CD4-positive, alpha-beta T cell (primary cell): ENCODE measurements at regions of chr6 and their contacts with region 1.

Region 1: DNA sequence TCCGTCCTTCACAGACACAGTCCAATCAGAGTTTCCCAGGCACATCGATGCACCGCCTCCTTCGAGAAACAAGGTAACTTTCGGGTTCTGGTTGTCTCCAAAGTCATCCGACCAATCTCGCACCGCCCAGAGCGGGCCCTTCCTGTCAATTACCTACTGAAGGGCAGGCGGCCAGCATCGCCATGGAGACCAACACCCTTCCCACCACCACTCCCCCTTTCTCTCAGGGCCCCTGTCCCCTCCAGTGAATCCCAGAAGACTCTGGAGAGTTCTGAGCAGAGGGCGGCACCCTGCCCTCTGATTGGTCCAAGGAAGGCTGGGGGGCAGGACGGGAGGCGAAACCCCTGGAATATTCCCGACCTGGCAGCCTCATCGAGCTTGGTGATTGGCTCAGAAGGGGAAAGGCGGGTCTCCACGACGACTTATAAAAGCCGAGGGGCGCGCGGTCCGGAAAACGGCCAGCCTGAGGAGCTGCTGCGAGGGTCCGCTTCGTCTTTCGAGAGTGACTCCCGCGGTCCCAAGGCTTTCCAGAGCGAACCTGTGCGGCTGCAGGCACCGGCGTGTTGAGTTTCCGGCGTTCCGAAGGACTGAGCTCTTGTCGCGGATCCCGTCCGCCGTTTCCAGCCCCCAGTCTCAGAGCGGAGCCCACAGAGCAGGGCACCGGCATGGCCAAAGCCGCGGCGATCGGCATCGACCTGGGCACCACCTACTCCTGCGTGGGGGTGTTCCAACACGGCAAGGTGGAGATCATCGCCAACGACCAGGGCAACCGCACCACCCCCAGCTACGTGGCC is at the start of gene HSPA1B:
- DNase-seq: peak; percentile 64 to 93 (median 84)
- ATAC-seq: peak; percentile 66
- H3K4me3 ChIP-seq: peak within 1 kb of the TSS; percentile 84
- H3K4me3 Mint-ChIP-seq: peak within 1 kb of the TSS; percentile 96
- H3K27ac ChIP-seq: peak within 1 kb of the TSS; percentile 74 to 76
- H3K27ac Mint-ChIP-seq: peak within 1 kb of the TSS; percentile 97
- H3K4me1 ChIP-seq: peaks cover 43% of the 10 kb centered on the region
- H3K4me1 Mint-ChIP-seq: peaks cover 43% of the 10 kb centered on the region
- H3K27me3 ChIP-seq: no peaks in the 10 kb centered on the region
- H3K27me3 Mint-ChIP-seq: no peaks in the 10 kb centered on the region
- CTCF ChIP-seq: no peak
- total RNA-seq, gene HSPA1B: 8.3 to 9.8 TPM

Region 2: DNA sequence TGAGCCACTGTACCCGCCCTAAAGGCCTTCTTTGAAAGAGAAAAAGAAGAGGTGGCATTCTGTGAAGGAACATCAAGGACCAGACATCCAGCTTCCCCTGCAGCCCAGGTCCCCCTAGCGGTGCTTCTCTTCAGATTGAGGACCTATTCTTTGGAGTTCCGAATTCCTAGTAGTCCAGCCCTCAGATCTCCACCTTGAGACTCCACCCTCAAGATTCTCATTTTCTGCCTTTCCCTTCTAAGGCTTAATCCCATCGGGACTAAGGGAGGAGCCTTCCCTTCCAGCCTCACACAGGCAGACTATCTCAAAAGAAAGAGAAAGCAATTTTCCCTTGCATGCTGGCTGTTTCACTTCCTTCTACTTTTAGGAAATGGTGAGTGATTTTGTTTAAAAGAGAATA is 784.7 kb before region 1 on chr6:
- CTCF ChIA-PET with region 1: no interaction called
- POLR2A ChIA-PET with region 1: no interaction called
- intact Hi-C with region 1: no loop called
- DNase-seq: peak in 9 of 14 experiments; percentile 4 to 57 (median 45)
- ATAC-seq: no peak
- H3K4me3 ChIP-seq: no peak overlapping the region
- H3K4me3 Mint-ChIP-seq: no peak overlapping the region
- H3K27ac ChIP-seq: no peak overlapping the region
- H3K27ac Mint-ChIP-seq: no peak overlapping the region
- H3K4me1 ChIP-seq: no peaks in the 10 kb centered on the region
- H3K4me1 Mint-ChIP-seq: no peaks in the 10 kb centered on the region
- H3K27me3 ChIP-seq: peaks cover 0 to under 1% of the 10 kb centered on the region in 2 experiments
- H3K27me3 Mint-ChIP-seq: peaks cover 42% of the 10 kb centered on the region
- CTCF ChIP-seq: peak; percentile 57

Region 3: DNA sequence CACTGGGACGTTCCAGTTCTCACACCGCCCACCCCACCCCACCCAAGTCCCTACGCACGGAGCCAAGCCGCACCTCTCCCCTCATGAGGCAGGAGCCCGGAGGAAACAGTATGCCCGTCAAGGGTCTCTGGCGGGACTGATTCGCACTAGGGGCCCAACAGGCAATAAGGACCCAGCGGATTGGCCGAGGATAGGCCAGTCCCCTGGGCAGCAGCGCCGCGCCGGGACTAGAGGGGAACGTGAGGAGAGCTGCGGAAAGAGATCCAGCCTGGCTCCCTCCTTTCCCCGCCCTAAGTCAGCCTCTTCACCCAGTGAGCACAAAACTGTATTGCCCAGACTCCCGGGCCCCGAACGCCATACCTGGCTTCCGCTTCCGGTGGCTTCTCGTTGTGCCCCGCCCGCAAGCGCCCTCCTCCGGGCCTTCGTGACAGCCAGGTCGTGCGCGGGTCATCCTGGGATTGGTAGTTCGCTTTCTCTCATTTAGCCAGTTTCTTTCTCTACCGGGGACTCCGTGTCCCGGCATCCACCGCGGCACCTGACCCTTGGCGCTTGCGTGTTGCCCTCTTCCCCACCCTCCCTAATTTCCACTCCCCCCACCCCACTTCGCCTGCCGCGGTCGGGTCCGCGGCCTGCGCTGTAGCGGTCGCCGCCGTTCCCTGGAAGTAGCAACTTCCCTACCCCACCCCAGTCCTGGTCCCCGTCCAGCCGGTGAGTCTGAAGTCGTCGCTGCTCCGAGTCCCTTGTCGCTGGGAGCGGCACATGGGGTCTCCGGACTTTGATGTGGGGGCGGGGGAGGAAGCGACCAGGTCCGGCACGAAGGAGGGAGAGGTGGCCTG is 161.8 kb before region 1 on chr6 and contains the start of gene CSNK2B:
- CTCF ChIA-PET with region 1: no interaction called
- POLR2A ChIA-PET with region 1: interaction called, 12 read pairs
- intact Hi-C with region 1: no loop called
- DNase-seq: peak; percentile 94 to 99 (median 97)
- ATAC-seq: peak; percentile 85
- H3K4me3 ChIP-seq: peak within 1 kb of the TSS; percentile 79
- H3K4me3 Mint-ChIP-seq: peak within 1 kb of the TSS; percentile 95
- H3K27ac ChIP-seq: peak within 1 kb of the TSS; percentile 93 to 96
- H3K27ac Mint-ChIP-seq: peak within 1 kb of the TSS; percentile 97
- H3K4me1 ChIP-seq: peaks cover 61% of the 10 kb centered on the region
- H3K4me1 Mint-ChIP-seq: peaks cover 51% of the 10 kb centered on the region
- H3K27me3 ChIP-seq: no peaks in the 10 kb centered on the region
- H3K27me3 Mint-ChIP-seq: no peaks in the 10 kb centered on the region
- CTCF ChIP-seq: no peak
- total RNA-seq, gene CSNK2B: 88.0 to 92.6 TPM

Region 4: DNA sequence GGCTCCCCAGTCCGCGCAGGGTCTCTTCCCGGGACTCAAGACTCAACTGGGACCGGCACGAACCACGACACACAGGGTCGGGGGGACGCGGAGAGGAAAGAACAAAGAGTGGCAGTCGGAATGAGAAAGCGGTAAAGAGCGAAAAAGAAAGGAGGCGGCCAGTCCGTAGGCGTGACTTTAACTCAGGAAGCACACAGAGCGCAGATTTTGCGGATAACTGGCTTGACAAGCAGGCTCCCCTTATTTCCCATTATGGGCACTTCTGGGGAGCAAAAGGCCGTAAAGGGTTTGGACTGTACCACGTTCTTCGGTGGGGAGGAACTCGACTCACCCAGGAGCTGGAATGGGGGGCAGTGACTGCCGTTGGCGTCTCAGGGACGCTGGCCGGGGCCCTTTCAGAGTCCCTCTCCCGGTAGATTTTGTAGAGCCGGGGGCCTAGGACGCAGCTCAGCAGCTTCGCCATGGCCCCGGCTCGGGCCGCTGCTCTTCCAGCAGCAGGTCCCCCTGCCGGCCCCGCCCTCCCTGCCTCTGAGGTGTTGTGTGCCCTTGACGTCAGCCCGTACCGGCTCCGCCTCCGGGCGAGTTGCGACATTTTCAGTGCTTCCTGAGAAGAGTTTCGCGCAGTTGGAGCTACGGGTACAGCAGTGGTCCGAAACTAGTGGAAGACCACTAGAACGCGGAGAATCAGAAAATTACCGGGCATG is 124.5 kb before region 1 on chr6 and contains the start of gene ABHD16A:
- CTCF ChIA-PET with region 1: interaction called, 5 read pairs
- POLR2A ChIA-PET with region 1: interaction called, 16 read pairs
- intact Hi-C with region 1: no loop called
- DNase-seq: peak; percentile 94 to 99 (median 97)
- ATAC-seq: peak; percentile 91
- H3K4me3 ChIP-seq: peak within 1 kb of the TSS; percentile 67
- H3K4me3 Mint-ChIP-seq: peak within 1 kb of the TSS; percentile 94
- H3K27ac ChIP-seq: peak within 1 kb of the TSS; percentile 95 to 98
- H3K27ac Mint-ChIP-seq: peak within 1 kb of the TSS; percentile 94
- H3K4me1 ChIP-seq: peaks cover 35% of the 10 kb centered on the region
- H3K4me1 Mint-ChIP-seq: peaks cover 33% of the 10 kb centered on the region
- H3K27me3 ChIP-seq: no peaks in the 10 kb centered on the region
- H3K27me3 Mint-ChIP-seq: no peaks in the 10 kb centered on the region
- CTCF ChIP-seq: no peak
- total RNA-seq, gene ABHD16A: 52.3 to 59.3 TPM

Region 5: DNA sequence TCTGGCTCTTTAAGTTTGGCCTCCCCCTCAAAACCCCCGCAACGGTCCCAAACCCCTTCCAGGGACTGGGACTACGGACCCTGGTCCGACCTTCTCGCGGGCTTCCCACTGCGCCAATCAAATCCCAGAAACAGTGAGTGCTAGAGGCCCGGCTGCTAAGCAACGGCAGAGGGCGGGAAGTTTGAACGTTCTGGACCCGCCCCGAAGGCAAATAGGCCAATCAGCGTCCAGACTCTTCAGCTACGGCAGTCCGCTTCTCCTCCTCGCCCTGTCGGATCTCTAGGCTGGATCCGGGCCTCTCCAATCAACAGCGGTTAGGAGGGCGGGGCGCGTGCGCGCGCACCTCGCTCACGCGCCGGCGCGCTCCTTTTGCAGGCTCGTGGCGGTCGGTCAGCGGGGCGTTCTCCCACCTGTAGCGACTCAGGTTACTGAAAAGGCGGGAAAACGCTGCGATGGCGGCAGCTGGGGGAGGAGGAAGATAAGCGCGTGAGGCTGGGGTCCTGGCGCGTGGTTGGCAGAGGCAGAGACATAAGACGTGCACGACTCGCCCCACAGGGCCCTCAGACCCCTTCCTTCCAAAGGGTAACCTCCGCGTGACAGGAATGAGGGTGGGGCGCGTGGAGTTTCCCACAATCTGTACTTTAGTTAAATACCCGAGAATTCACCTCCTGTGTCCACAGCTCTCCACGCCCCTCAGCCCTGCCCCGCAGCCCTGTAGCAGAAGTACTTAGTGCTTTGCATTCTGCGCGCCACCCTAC is 87.7 kb before region 1 on chr6 and contains the start of gene MSH5:
- CTCF ChIA-PET with region 1: interaction called, 10 read pairs
- POLR2A ChIA-PET with region 1: interaction called, 9 read pairs
- intact Hi-C with region 1: no loop called
- DNase-seq: peak; percentile 85 to 98 (median 93)
- ATAC-seq: peak; percentile 85
- H3K4me3 ChIP-seq: peak within 1 kb of the TSS; percentile 87
- H3K4me3 Mint-ChIP-seq: peak within 1 kb of the TSS; percentile 90
- H3K27ac ChIP-seq: peak within 1 kb of the TSS; percentile 38 to 58
- H3K27ac Mint-ChIP-seq: peak within 1 kb of the TSS; percentile 85
- H3K4me1 ChIP-seq: peaks cover 53% of the 10 kb centered on the region
- H3K4me1 Mint-ChIP-seq: peaks cover 61% of the 10 kb centered on the region
- H3K27me3 ChIP-seq: no peaks in the 10 kb centered on the region
- H3K27me3 Mint-ChIP-seq: no peaks in the 10 kb centered on the region
- CTCF ChIP-seq: no peak
- total RNA-seq, gene MSH5: 13.6 to 13.7 TPM

Region 6: GRCh38 chr6:31806465-31807272 is 20.8 kb before region 1 on chr6 and contains the start of gene LSM2:
- CTCF ChIA-PET with region 1: interaction called, 11 read pairs
- POLR2A ChIA-PET with region 1: interaction called, 24 read pairs
- intact Hi-C with region 1: loop called in 1 of 2 experiments (anchors 2 kb)
- DNase-seq: peak; percentile 93 to 99 (median 96)
- ATAC-seq: peak; percentile 99
- H3K4me3 ChIP-seq: peak within 1 kb of the TSS; percentile 70
- H3K4me3 Mint-ChIP-seq: peak within 1 kb of the TSS; percentile 86
- H3K27ac ChIP-seq: peak within 1 kb of the TSS; percentile 78 to 83
- H3K27ac Mint-ChIP-seq: peak within 1 kb of the TSS; percentile 87
- H3K4me1 ChIP-seq: peaks cover 28% of the 10 kb centered on the region
- H3K4me1 Mint-ChIP-seq: peaks cover 34% of the 10 kb centered on the region
- H3K27me3 ChIP-seq: no peaks in the 10 kb centered on the region
- H3K27me3 Mint-ChIP-seq: no peaks in the 10 kb centered on the region
- CTCF ChIP-seq: no peak
- total RNA-seq, gene LSM2: 12.6 to 13.7 TPM

Region 7: GRCh38 chr6:31862344-31863227 is 35.1 kb after region 1 on chr6 and contains the start of gene NEU1:
- CTCF ChIA-PET with region 1: interaction called, 11 read pairs
- POLR2A ChIA-PET with region 1: interaction called, 12 read pairs
- intact Hi-C with region 1: no loop called
- DNase-seq: peak; percentile 95 to 100 (median 98)
- ATAC-seq: peak; percentile 93
- H3K4me3 ChIP-seq: peak within 1 kb of the TSS; percentile 99
- H3K4me3 Mint-ChIP-seq: peak within 1 kb of the TSS; percentile 88
- H3K27ac ChIP-seq: peak within 1 kb of the TSS; percentile 80 to 96
- H3K27ac Mint-ChIP-seq: peak within 1 kb of the TSS; percentile 91
- H3K4me1 ChIP-seq: peaks cover 37% of the 10 kb centered on the region
- H3K4me1 Mint-ChIP-seq: peaks cover 28% of the 10 kb centered on the region
- H3K27me3 ChIP-seq: no peaks in the 10 kb centered on the region
- H3K27me3 Mint-ChIP-seq: no peaks in the 10 kb centered on the region
- CTCF ChIP-seq: no peak
- total RNA-seq, gene NEU1: 19.7 to 21.1 TPM

Region 8: DNA sequence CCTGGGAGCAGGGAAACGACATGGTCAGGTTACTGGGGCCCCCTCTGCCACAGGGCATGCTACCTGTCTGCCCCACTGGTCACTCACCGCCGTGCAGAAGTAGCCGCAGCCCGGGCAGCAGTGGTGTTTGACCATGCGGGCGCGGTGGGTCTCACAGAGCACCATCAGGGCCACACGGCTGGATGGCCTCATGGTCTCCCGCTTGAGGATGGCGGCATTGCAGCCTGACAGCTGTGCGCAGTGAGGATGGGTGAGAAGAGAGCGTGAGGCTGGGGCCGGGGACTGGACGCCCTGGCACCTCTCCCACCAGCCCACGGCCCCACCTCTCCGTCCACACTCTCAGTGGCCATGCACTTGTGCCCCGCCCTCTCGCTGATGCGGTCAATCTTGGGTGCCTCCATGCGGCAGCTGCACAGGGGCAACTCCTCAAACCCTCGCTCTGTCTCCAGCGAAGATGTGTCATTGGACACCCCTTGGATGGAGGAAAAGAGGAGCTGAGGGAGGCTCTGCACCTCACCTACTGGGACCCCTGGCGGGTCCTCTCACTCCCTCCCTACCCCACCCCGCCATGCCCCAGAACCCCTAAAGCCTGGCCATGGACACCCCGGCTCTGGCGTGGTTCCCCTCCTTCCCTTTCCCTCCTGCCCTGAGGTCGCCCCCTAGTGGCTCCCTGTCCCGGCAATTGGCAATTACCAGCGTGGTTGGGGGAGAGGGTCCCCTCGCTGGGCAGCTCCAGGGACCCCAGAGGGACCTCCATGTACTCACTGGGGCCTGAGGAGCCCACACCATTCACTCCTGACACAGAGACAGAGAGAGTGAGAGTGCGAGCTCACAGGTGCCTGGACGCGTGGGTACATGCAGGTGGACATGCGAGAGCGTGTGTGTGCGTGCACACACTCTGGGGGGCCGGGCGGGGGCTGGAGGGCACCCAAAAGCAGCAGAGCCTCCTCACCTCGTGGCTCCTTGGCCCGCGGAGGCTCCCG is 61.1 kb after region 1 on chr6:
- CTCF ChIA-PET with region 1: no interaction called
- POLR2A ChIA-PET with region 1: no interaction called
- intact Hi-C with region 1: no loop called
- DNase-seq: peak; percentile 40 to 72 (median 52)
- ATAC-seq: peak; percentile 70
- H3K4me3 ChIP-seq: no peak overlapping the region
- H3K4me3 Mint-ChIP-seq: no peak overlapping the region
- H3K27ac ChIP-seq: no peak overlapping the region
- H3K27ac Mint-ChIP-seq: no peak overlapping the region
- H3K4me1 ChIP-seq: peaks cover 8% of the 10 kb centered on the region
- H3K4me1 Mint-ChIP-seq: no peaks in the 10 kb centered on the region
- H3K27me3 ChIP-seq: no peaks in the 10 kb centered on the region
- H3K27me3 Mint-ChIP-seq: no peaks in the 10 kb centered on the region
- CTCF ChIP-seq: peak; percentile 84